Activated CD4-positive, alpha-beta T cell treated with anti-CD3 and anti-CD28 coated beads for 36 hours (primary cell): ENCODE measurements at regions of chr9 and their contacts with region 1.

Region 1: DNA sequence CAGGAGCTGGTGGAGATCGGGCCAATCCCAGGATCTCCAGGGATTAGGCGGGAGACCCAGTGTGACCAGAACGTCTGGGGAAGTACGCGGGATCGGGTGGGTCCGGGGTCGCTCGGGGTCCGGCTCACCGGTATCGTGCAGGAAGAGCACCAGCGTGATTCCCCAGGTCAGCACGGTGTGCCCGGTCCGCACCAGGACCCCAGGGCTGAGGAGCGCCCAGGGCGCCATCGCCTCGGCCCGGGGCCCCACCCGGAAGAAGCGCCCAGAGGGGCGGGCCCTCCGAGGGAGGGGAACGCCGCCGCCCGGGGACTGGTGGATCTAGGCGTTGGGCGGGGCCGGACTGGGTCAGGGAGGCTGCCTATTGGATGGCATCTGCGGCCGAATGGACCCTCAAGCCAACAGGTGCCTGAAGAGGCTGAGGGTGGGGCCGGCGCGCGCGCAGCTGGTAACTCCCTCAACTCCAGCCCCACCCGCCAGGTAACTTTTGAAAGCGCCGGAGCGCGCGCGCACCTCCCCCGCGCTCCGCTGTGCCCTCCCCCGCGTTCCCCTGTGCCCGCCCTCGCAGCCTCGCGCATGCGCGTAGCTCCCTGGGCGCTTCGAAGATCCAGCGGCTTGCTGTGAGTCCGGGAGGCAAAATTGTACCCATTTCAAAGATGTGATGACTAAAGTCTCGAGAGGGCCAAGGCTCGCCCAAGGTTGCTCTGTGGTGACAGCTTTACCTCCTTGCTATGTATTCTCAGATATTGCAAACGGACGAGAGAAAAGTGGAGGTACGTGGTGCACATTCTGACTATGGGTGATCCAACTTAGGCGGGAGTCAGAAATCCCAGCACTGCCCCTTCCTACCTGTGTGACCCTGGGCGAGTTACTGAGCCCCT is at the start of gene ZDHHC12:
- DNase-seq: peak; percentile 100
- ATAC-seq: peak; percentile 98
- H3K4me3 Mint-ChIP-seq: peak within 1 kb of the TSS; percentile 95
- H3K27ac Mint-ChIP-seq: peak within 1 kb of the TSS; percentile 94
- H3K4me1 Mint-ChIP-seq: peaks cover 25% of the 10 kb centered on the region
- H3K27me3 Mint-ChIP-seq: no peaks in the 10 kb centered on the region
- total RNA-seq, gene ZDHHC12: 45.3 to 49.5 TPM

Region 2: GRCh38 chr9:128159784-128160602 is 564.1 kb before region 1 on chr9 and contains the start of gene BBLN:
- CTCF ChIA-PET with region 1: no interaction called
- POLR2A ChIA-PET with region 1: no interaction called
- intact Hi-C with region 1: loop called in 1 of 2 experiments (anchors 1 kb)
- DNase-seq: peak; percentile 98
- ATAC-seq: peak; percentile 91
- H3K4me3 Mint-ChIP-seq: peak within 1 kb of the TSS; percentile 74
- H3K27ac Mint-ChIP-seq: peak within 1 kb of the TSS; percentile 90
- H3K4me1 Mint-ChIP-seq: peaks cover 19% of the 10 kb centered on the region
- H3K27me3 Mint-ChIP-seq: no peaks in the 10 kb centered on the region
- total RNA-seq, gene BBLN: 64.4 to 68.5 TPM

Region 3: GRCh38 chr9:128333451-128333869 is 390.6 kb before region 1 on chr9:
- CTCF ChIA-PET with region 1: no interaction called
- POLR2A ChIA-PET with region 1: no interaction called
- intact Hi-C with region 1: no loop called
- DNase-seq: no peak
- ATAC-seq: no peak
- H3K4me3 Mint-ChIP-seq: no peak overlapping the region
- H3K27ac Mint-ChIP-seq: no peak overlapping the region
- H3K4me1 Mint-ChIP-seq: no peaks in the 10 kb centered on the region
- H3K27me3 Mint-ChIP-seq: no peaks in the 10 kb centered on the region

Region 4: GRCh38 chr9:128370826-128371621 is 353.1 kb before region 1 on chr9 and contains the start of gene URM1:
- CTCF ChIA-PET with region 1: no interaction called
- POLR2A ChIA-PET with region 1: no interaction called
- intact Hi-C with region 1: loop called in 1 of 2 experiments (anchors 2 kb)
- DNase-seq: peak; percentile 98
- ATAC-seq: peak; percentile 98
- H3K4me3 Mint-ChIP-seq: peak within 1 kb of the TSS; percentile 87
- H3K27ac Mint-ChIP-seq: peak within 1 kb of the TSS; percentile 89
- H3K4me1 Mint-ChIP-seq: peaks cover 27% of the 10 kb centered on the region
- H3K27me3 Mint-ChIP-seq: no peaks in the 10 kb centered on the region
- total RNA-seq, gene URM1: 39.9 to 56.1 TPM

Region 5: DNA sequence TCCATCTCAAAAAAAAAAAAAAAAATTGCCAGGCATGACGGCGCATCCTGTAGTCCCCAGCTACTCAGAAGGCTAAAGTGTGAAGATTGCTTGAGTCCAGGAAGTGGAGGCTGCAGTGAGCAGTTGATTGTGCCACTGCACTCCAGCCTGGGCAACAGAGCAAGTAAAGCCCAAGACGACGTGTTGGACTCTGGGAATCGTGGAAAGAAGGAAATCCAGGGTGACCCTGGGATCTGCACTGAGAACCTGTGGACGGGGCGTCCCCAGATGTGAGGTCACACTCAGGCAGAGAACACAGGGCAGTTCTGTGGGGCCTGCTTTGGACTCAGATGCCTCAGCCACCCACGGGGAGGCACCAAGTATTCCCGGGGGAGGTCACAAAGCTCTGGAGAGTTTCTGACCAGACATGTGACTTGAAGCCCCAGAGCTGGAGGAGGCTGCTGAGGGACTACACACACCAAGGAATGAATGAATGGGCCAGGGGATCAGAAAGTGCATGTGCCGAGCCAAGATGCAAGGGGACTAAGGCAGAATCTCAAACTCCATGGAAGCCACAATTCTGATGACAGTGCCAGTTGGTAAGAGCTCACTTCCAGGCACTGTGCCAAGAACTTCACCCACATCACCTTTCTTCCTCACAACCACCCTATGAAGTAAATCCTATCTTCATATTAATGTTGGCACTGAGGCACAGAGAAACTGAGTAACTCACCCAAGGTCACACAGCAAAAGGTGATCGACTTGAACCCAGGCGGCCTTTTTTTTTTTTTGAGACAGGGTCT is 80.4 kb before region 1 on chr9:
- CTCF ChIA-PET with region 1: interaction called, 3 read pairs
- POLR2A ChIA-PET with region 1: no interaction called
- intact Hi-C with region 1: loop called in 1 of 2 experiments (anchors 2 kb)
- DNase-seq: no peak
- ATAC-seq: no peak
- H3K4me3 Mint-ChIP-seq: no peak overlapping the region
- H3K27ac Mint-ChIP-seq: no peak overlapping the region
- H3K4me1 Mint-ChIP-seq: no peaks in the 10 kb centered on the region
- H3K27me3 Mint-ChIP-seq: no peaks in the 10 kb centered on the region

Region 6: GRCh38 chr9:128735373-128735772 is 11.3 kb after region 1 on chr9:
- CTCF ChIA-PET with region 1: no interaction called
- POLR2A ChIA-PET with region 1: no interaction called
- intact Hi-C with region 1: no loop called
- DNase-seq: no peak
- ATAC-seq: no peak
- H3K4me3 Mint-ChIP-seq: no peak overlapping the region
- H3K27ac Mint-ChIP-seq: no peak overlapping the region
- H3K4me1 Mint-ChIP-seq: no peaks in the 10 kb centered on the region
- H3K27me3 Mint-ChIP-seq: no peaks in the 10 kb centered on the region

Region 7: DNA sequence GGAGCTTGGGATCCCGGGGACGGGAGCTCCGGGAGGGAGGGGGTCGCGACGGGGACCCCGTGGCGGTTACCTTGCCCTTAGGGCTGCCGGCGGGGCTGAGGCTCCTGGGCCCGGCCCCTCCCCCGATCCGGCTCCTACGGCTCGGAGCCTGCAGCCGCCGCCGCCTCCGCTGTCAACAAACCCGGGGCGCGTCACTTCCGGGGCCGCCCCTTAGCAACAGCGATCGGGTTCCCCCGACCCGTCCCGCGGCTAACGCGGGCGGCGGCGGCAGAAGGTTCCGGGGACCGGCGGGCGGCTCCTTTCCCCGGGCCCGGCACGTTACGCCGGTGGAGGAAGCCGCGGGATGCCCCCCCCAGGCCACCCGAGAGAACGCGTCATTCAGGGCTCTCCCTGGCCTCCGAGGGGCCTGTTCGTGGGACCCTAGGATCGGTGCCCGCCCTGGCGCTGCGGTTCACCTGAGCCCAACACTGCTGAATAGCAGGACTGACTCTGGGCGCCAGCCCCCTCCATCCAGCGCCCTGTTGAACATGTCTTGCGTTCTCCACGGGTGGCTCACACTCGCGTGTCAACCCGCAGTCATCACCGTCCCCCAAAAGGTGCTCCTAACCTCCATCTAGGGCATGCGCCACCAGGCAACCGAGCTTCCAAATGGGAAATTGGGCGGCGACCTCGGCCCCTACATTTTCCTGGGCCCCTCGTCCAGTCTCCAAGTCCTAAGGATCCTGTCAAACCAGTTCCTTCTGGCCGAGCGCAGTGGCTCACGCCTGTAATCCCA is 47.8 kb after region 1 on chr9 and contains the start of gene ZER1:
- CTCF ChIA-PET with region 1: no interaction called
- POLR2A ChIA-PET with region 1: no interaction called
- intact Hi-C with region 1: loop called (anchors 1 to 10 kb)
- DNase-seq: peak; percentile 97
- ATAC-seq: peak; percentile 94
- H3K4me3 Mint-ChIP-seq: peak within 1 kb of the TSS; percentile 82
- H3K27ac Mint-ChIP-seq: peak within 1 kb of the TSS; percentile 86
- H3K4me1 Mint-ChIP-seq: peaks cover 18% of the 10 kb centered on the region
- H3K27me3 Mint-ChIP-seq: no peaks in the 10 kb centered on the region
- total RNA-seq, gene ZER1: 17.1 to 19.3 TPM

Region 8: GRCh38 chr9:128947422-128948301 is 223.6 kb after region 1 on chr9 and contains the starts of genes DOLK and NUP188:
- CTCF ChIA-PET with region 1: no interaction called
- POLR2A ChIA-PET with region 1: no interaction called
- intact Hi-C with region 1: loop called in 1 of 2 experiments (anchors 1 kb)
- DNase-seq: peak; percentile 99
- ATAC-seq: peak; percentile 80
- H3K4me3 Mint-ChIP-seq: peak within 1 kb of the TSS; percentile 89
- H3K27ac Mint-ChIP-seq: peak within 1 kb of the TSS; percentile 95
- H3K4me1 Mint-ChIP-seq: peaks cover 29% of the 10 kb centered on the region
- H3K27me3 Mint-ChIP-seq: no peaks in the 10 kb centered on the region
- total RNA-seq, gene DOLK: 4.8 to 5.0 TPM
- total RNA-seq, gene NUP188: 102 to 124 TPM

Region 9: GRCh38 chr9:129328377-129329028 is 604.4 kb after region 1 on chr9:
- CTCF ChIA-PET with region 1: no interaction called
- POLR2A ChIA-PET with region 1: no interaction called
- intact Hi-C with region 1: no loop called
- DNase-seq: peak; percentile 69
- ATAC-seq: peak; percentile 52
- H3K4me3 Mint-ChIP-seq: no peak overlapping the region
- H3K27ac Mint-ChIP-seq: peak overlapping the region; percentile 25
- H3K4me1 Mint-ChIP-seq: peaks cover 21% of the 10 kb centered on the region
- H3K27me3 Mint-ChIP-seq: no peaks in the 10 kb centered on the region